ENCODE measurements at regions of chr9 and their contacts with region 1.

Region 1: GRCh38 chr9:114405294-114406034 is 17.7 kb upstream of the AKNA start:
- DNase-seq: peak; percentile 69 to 91 (median 75)
- ATAC-seq: peak; percentile 100
- H3K4me3 ChIP-seq: no peak overlapping the region
- H3K4me3 Mint-ChIP-seq: peak overlapping the region; percentile 30
- H3K27ac ChIP-seq: no peak overlapping the region
- H3K27ac Mint-ChIP-seq: peak overlapping the region; percentile 6
- H3K4me1 ChIP-seq: peaks cover 11% of the 10 kb centered on the region
- H3K4me1 Mint-ChIP-seq: peaks cover 7% of the 10 kb centered on the region
- H3K27me3 ChIP-seq: no peaks in the 10 kb centered on the region
- H3K27me3 Mint-ChIP-seq: no peaks in the 10 kb centered on the region
- CTCF ChIP-seq: peak; percentile 90

Region 2: DNA sequence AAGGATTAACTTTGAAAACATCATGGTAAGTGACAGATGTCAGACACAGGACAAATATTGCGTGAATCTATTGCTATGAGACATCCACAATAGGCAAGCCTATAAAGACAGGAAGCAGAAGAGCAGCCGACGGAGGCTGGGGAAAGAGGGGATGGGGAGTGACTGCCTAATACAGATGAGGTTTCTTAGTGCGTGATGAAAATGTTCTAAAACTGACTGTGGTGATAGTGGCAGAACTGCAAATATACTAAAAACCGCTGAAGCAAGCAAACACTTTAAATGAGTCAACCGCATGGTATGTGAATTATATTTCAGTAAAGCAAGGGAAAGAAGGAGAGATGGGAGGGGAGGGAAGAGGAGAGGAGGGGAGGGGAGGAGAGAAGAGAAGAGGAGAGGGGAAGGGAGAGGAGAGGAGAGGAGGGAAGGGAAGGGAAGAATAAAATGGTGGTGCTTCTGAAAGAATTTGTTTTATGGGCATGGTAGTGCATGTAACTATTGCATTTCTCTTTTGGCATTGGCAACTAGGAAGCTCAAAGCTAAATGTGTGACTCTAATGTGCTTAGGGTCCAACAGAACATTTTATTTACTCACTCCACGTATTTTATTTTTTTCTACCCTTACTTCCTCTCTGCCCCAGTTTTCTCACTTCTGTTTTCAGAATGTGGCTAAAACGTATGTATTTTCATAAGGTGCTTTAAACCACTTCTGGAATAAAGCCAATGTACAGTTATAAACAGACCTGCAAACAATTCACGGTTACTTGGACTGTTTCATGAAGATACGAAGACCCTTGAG is 38.9 kb before region 1 on chr9:
- CTCF ChIA-PET with region 1: interaction called, 10 read pairs
- POLR2A ChIA-PET with region 1: no interaction called
- intact Hi-C with region 1: no loop called
- DNase-seq: peak in 7 of 14 experiments; percentile 29 to 77 (median 67)
- ATAC-seq: peak; percentile 81
- H3K4me3 ChIP-seq: no peak overlapping the region
- H3K4me3 Mint-ChIP-seq: peak overlapping the region; percentile 78
- H3K27ac ChIP-seq: peak overlapping the region; percentile 77 to 81
- H3K27ac Mint-ChIP-seq: peak overlapping the region; percentile 83
- H3K4me1 ChIP-seq: peaks cover 96% of the 10 kb centered on the region
- H3K4me1 Mint-ChIP-seq: peaks cover 91% of the 10 kb centered on the region
- H3K27me3 ChIP-seq: no peaks in the 10 kb centered on the region
- H3K27me3 Mint-ChIP-seq: no peaks in the 10 kb centered on the region
- CTCF ChIP-seq: no peak

Region 3: DNA sequence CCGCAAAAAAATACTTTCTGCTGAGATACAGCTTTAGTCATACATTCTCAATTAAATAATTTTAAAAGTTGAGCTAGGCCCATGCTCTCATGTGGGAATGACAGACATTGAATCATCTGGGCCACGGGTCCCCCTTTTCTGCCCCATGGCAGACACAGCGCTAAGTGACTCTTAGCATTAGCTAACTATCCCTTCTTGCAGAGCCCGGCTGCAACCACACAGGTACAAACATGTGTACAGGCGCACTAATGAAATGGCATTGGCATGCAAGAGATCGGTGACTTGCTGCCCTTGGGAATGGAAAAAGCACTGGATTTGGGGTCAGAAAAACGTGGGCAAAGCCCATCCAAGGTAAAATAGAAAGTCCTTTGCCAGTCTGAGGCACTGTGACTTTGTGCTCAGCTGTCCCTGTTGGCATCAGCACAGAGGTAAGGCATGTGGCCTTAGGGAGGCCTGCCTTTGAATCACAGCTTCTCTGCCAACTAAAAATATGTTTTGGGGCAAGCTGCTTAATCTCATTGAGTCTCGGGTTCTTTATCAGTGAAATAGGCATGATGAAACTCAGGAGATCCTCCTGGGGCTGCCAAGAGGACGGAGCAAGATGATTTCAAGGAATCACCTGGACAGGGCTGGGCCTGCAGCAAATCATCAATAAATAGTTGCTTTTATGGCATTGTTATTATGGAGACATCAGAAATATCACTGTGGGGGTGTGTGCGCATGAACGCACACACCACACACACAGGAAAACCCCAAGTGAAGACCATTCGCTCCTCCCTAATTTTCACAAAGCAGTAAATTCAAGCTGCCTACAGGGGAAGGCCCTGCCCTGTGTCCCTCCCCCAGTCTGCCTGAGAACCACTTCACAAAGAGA is 45.6 kb after region 1 on chr9:
- CTCF ChIA-PET with region 1: no interaction called
- POLR2A ChIA-PET with region 1: no interaction called
- intact Hi-C with region 1: no loop called
- DNase-seq: peak in 3 of 14 experiments; percentile 56 to 67 (median 62)
- ATAC-seq: peak; percentile 72
- H3K4me3 ChIP-seq: no peak overlapping the region
- H3K4me3 Mint-ChIP-seq: peak overlapping the region; percentile 23
- H3K27ac ChIP-seq: peak overlapping the region in 1 of 2 donors; percentile 2
- H3K27ac Mint-ChIP-seq: peak overlapping the region; percentile 82
- H3K4me1 ChIP-seq: peaks cover 24% of the 10 kb centered on the region
- H3K4me1 Mint-ChIP-seq: peaks cover 32% of the 10 kb centered on the region
- H3K27me3 ChIP-seq: no peaks in the 10 kb centered on the region
- H3K27me3 Mint-ChIP-seq: no peaks in the 10 kb centered on the region
- CTCF ChIP-seq: no peak

Region 4: DNA sequence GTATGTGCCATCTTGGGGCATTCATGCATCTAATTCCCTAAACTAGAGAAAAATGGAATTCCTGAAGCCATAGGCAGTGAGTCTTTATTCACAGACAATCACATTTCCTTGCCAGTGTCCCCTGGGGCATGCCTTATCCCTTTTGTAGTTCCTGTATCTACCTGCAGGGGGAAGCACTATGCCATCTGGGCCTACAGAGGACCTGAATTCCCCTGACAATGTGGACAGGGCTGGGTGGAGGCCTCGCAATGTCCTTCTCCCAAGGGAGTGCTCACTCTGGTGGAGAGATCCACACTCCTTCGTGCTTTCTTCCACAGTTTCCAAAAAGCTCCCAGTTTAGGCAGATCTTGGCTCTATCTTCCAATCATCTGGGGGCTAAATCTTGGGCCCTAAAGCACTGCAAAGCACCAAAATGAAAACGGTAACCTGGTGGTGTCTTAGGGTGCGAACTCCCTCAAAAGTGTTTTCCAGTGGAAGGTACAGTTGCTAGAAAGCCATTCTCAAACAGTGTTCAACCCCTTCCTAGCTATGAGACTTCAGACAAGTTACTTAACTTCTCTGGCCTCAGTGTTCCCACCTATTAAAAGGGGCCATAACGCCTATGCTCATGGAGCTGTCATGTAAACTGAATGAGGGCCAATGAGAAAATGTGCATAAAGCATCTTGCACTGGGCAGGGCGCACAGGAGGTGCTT is 82.3 kb after region 1 on chr9:
- CTCF ChIA-PET with region 1: interaction called, 8 read pairs
- POLR2A ChIA-PET with region 1: no interaction called
- intact Hi-C with region 1: loop called (anchors 5 kb)
- DNase-seq: peak; percentile 32 to 86 (median 48)
- ATAC-seq: peak; percentile 90
- H3K4me3 ChIP-seq: no peak overlapping the region
- H3K4me3 Mint-ChIP-seq: no peak overlapping the region
- H3K27ac ChIP-seq: no peak overlapping the region
- H3K27ac Mint-ChIP-seq: no peak overlapping the region
- H3K4me1 ChIP-seq: peaks cover 22% of the 10 kb centered on the region
- H3K4me1 Mint-ChIP-seq: peaks cover 11% of the 10 kb centered on the region
- H3K27me3 ChIP-seq: no peaks in the 10 kb centered on the region
- H3K27me3 Mint-ChIP-seq: no peaks in the 10 kb centered on the region
- CTCF ChIP-seq: peak; percentile 85

Region 5: DNA sequence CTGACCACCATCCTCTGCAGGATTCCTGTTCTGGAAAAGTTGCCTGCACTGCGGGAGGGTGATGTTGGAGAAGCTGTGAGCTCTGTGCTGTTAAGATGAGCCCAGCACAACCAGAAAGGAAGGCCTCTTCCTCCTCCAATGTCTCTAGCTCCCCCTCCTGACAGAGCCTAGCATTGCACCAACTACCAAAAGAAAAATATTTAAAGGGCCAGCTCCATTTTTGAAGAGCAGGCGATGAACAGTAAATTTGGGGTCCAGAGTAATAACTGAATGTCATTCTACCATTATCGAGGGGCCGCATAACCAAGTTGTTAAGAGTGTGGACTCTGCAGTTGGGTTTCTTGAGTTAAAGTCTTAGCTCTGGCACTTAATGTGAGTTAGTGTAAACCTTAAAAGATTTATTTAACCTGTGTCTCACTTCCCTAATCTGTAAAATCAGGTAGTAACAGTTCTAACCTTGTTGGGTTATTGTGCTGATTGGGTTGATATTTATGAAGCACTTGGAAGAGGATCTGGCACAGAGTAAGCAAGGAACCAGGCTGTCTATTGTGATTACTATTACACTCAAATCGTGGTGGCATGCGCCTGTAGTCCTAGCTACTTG is 248.2 kb after region 1 on chr9:
- CTCF ChIA-PET with region 1: interaction called, 76 read pairs
- POLR2A ChIA-PET with region 1: interaction called, 29 read pairs
- intact Hi-C with region 1: loop called (anchors 1 kb)
- DNase-seq: peak; percentile 59 to 89 (median 82)
- ATAC-seq: peak; percentile 99
- H3K4me3 ChIP-seq: no peak overlapping the region
- H3K4me3 Mint-ChIP-seq: no peak overlapping the region
- H3K27ac ChIP-seq: no peak overlapping the region
- H3K27ac Mint-ChIP-seq: peak overlapping the region; percentile 30
- H3K4me1 ChIP-seq: peaks cover 8% of the 10 kb centered on the region
- H3K4me1 Mint-ChIP-seq: peaks cover 21% of the 10 kb centered on the region
- H3K27me3 ChIP-seq: no peaks in the 10 kb centered on the region
- H3K27me3 Mint-ChIP-seq: no peaks in the 10 kb centered on the region
- CTCF ChIP-seq: peak; percentile 88

Region 6: DNA sequence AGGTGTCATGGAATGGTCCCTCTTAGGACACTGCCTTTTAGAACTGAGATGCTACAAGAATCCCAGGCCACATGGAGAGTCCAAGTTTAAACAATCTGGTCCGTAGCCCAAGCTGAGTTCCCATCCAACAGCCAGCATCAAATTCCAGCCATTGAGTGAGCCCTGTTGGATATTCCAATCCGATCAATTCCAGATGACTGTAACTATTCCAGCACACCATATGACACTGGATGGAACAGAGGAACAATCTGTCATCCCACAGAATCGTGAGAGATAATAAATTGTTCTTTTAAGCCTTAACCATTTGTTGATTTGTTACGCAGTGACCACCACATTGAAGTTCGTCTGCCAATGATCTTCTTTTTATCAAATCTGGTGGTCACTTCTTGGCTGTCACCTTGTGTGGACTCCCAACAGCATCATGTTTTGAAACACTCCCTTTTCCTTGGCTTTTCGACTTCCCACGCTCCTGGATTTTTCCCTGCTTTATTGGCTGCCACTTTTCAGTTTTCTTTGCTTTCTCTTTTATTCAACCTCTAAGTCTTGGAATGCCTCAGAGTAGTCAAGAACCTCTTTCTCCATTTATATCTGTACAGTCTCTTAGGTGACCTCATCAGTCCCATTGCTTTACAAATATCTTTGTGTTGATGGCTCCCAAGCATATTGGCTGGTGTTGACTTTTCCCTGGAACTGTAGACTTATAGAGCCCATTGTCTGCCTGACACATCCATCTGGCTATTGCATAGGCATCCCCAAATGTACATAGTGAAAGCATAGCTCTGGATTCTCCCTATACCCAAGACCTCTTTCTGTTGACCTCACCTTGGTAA is 354.3 kb after region 1 on chr9:
- CTCF ChIA-PET with region 1: no interaction called
- POLR2A ChIA-PET with region 1: no interaction called
- intact Hi-C with region 1: no loop called
- DNase-seq: no peak
- ATAC-seq: no peak
- H3K4me3 ChIP-seq: no peak overlapping the region
- H3K4me3 Mint-ChIP-seq: no peak overlapping the region
- H3K27ac ChIP-seq: no peak overlapping the region
- H3K27ac Mint-ChIP-seq: no peak overlapping the region
- H3K4me1 ChIP-seq: peaks cover 2% of the 10 kb centered on the region
- H3K4me1 Mint-ChIP-seq: peaks cover under 1% of the 10 kb centered on the region
- H3K27me3 ChIP-seq: no peaks in the 10 kb centered on the region
- H3K27me3 Mint-ChIP-seq: no peaks in the 10 kb centered on the region
- CTCF ChIP-seq: no peak

Region 7: GRCh38 chr9:114906908-114907571 is 501.6 kb after region 1 on chr9:
- CTCF ChIA-PET with region 1: no interaction called
- POLR2A ChIA-PET with region 1: no interaction called
- intact Hi-C with region 1: loop called in 1 of 2 experiments (anchors 5 kb)
- DNase-seq: peak in 4 of 14 experiments; percentile 34 to 66 (median 56)
- ATAC-seq: no peak
- H3K4me3 ChIP-seq: no peak overlapping the region
- H3K4me3 Mint-ChIP-seq: no peak overlapping the region
- H3K27ac ChIP-seq: peak overlapping the region in 1 of 2 donors; percentile 7
- H3K27ac Mint-ChIP-seq: peak overlapping the region; percentile 85
- H3K4me1 ChIP-seq: peaks cover 84% of the 10 kb centered on the region
- H3K4me1 Mint-ChIP-seq: peaks cover 55% of the 10 kb centered on the region
- H3K27me3 ChIP-seq: no peaks in the 10 kb centered on the region
- H3K27me3 Mint-ChIP-seq: no peaks in the 10 kb centered on the region
- CTCF ChIP-seq: peak; percentile 69

Region 8: GRCh38 chr9:115524453-115525059 is 1119.1 kb after region 1 on chr9:
- CTCF ChIA-PET with region 1: no interaction called
- POLR2A ChIA-PET with region 1: no interaction called
- intact Hi-C with region 1: loop called in 1 of 2 experiments (anchors 10 kb)
- DNase-seq: peak in 4 of 14 experiments; percentile 11 to 47 (median 40)
- ATAC-seq: no peak
- H3K4me3 ChIP-seq: no peak overlapping the region
- H3K4me3 Mint-ChIP-seq: no peak overlapping the region
- H3K27ac ChIP-seq: no peak overlapping the region
- H3K27ac Mint-ChIP-seq: no peak overlapping the region
- H3K4me1 ChIP-seq: no peaks in the 10 kb centered on the region
- H3K4me1 Mint-ChIP-seq: no peaks in the 10 kb centered on the region
- H3K27me3 ChIP-seq: peaks cover 0 to 11% of the 10 kb centered on the region in 2 experiments
- H3K27me3 Mint-ChIP-seq: peaks cover 44% of the 10 kb centered on the region
- CTCF ChIP-seq: peak; percentile 33

Measured in CD4-positive, alpha-beta T cell (primary cell).